HepG2 (cell line): ENCODE measurements at regions of chr3 and their contacts with region 1.

Region 1: GRCh38 chr3:22117751-22118346 is 366.8 kb upstream of the ZNF385D start:
- DNase-seq: peak; percentile 34
- ATAC-seq: no peak
- H3K4me3 ChIP-seq: no peak overlapping the region
- H3K27ac ChIP-seq: no peak overlapping the region
- H3K4me1 ChIP-seq: peaks cover 26% of the 10 kb centered on the region
- H3K27me3 ChIP-seq: no peaks in the 10 kb centered on the region
- CTCF ChIP-seq: peak; percentile 55
- EP300 ChIP-seq: no peak
- POLR2A ChIP-seq: no peak
- RAD21 ChIP-seq: no peak

Region 2: GRCh38 chr3:21752749-21753347 is 365.0 kb before region 1 on chr3:
- CTCF ChIA-PET with region 1: no interaction called
- POLR2A ChIA-PET with region 1: no interaction called
- in situ Hi-C with region 1: no loop called
- intact Hi-C with region 1: loop called (anchors 10 kb)
- DNase-seq: peak; percentile 2
- ATAC-seq: no peak
- H3K4me3 ChIP-seq: no peak overlapping the region
- H3K27ac ChIP-seq: no peak overlapping the region
- H3K4me1 ChIP-seq: no peaks in the 10 kb centered on the region
- H3K27me3 ChIP-seq: 0 out of 5 replicates have a peak, but pooled peaks cover 0 to 4% of the 10 kb centered on the region in 2 experiments
- CTCF ChIP-seq: peak; percentile 54
- EP300 ChIP-seq: no peak
- POLR2A ChIP-seq: no peak
- RAD21 ChIP-seq: no peak

Region 3: GRCh38 chr3:21806733-21807132 is 311.1 kb before region 1 on chr3:
- CTCF ChIA-PET with region 1: no interaction called
- POLR2A ChIA-PET with region 1: no interaction called
- in situ Hi-C with region 1: no loop called
- intact Hi-C with region 1: no loop called
- DNase-seq: no peak
- ATAC-seq: no peak
- H3K4me3 ChIP-seq: no peak overlapping the region
- H3K27ac ChIP-seq: no peak overlapping the region
- H3K4me1 ChIP-seq: no peaks in the 10 kb centered on the region
- H3K27me3 ChIP-seq: no peaks in the 10 kb centered on the region
- CTCF ChIP-seq: no peak
- EP300 ChIP-seq: no peak
- POLR2A ChIP-seq: no peak
- RAD21 ChIP-seq: no peak

Region 4: GRCh38 chr3:22012471-22012870 is 105.4 kb before region 1 on chr3:
- CTCF ChIA-PET with region 1: no interaction called
- POLR2A ChIA-PET with region 1: no interaction called
- in situ Hi-C with region 1: no loop called
- intact Hi-C with region 1: no loop called
- DNase-seq: no peak
- ATAC-seq: no peak
- H3K4me3 ChIP-seq: no peak overlapping the region
- H3K27ac ChIP-seq: no peak overlapping the region
- H3K4me1 ChIP-seq: no peaks in the 10 kb centered on the region
- H3K27me3 ChIP-seq: no peaks in the 10 kb centered on the region
- CTCF ChIP-seq: no peak
- EP300 ChIP-seq: no peak
- POLR2A ChIP-seq: no peak
- RAD21 ChIP-seq: no peak

Region 5: GRCh38 chr3:22225161-22225560 is 107.3 kb after region 1 on chr3:
- CTCF ChIA-PET with region 1: no interaction called
- POLR2A ChIA-PET with region 1: no interaction called
- in situ Hi-C with region 1: no loop called
- intact Hi-C with region 1: no loop called
- DNase-seq: no peak
- ATAC-seq: no peak
- H3K4me3 ChIP-seq: no peak overlapping the region
- H3K27ac ChIP-seq: no peak overlapping the region
- H3K4me1 ChIP-seq: no peaks in the 10 kb centered on the region
- H3K27me3 ChIP-seq: no peaks in the 10 kb centered on the region
- CTCF ChIP-seq: no peak
- EP300 ChIP-seq: no peak
- POLR2A ChIP-seq: no peak
- RAD21 ChIP-seq: no peak